ENCODE measurements at regions of chr2 and their contacts with region 1.

Region 1: DNA sequence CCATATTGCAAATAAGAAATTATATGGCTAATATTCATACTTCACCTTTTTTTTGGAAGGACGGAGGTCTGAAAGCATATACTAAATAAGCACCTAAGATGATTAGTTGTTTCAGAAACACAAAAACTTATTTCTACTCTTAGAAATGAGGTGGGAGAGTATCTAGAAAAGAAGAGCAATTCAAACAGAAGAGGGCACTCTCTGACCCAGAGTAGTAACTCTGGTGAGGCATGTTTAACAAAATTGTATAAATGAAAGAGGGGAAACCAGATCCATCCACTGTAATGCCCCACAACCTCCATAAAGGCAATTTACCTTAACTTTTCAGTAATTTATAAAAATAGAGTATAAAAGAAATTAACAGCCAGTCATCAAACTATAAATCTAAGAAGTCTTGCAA is 669.6 kb upstream of the VRK2 start:
- DNase-seq: peak; percentile 28
- H3K4me3 ChIP-seq: no peak overlapping the region
- H3K27ac ChIP-seq: no peak overlapping the region
- H3K4me1 ChIP-seq: no peaks in the 10 kb centered on the region
- H3K27me3 ChIP-seq: no peaks in the 10 kb centered on the region
- CTCF ChIP-seq: peak; percentile 44; the same call in 1 of the 2 replicates

Region 2: GRCh38 chr2:56654936-56655335 is 722.0 kb before region 1 on chr2:
- CTCF ChIA-PET with region 1: no interaction called
- POLR2A ChIA-PET with region 1: no interaction called
- intact Hi-C with region 1: no loop called
- DNase-seq: no peak
- H3K4me3 ChIP-seq: no peak overlapping the region
- H3K27ac ChIP-seq: no peak overlapping the region
- H3K4me1 ChIP-seq: no peaks in the 10 kb centered on the region
- H3K27me3 ChIP-seq: peaks cover 49% of the 10 kb centered on the region
- CTCF ChIP-seq: no peak

Region 3: GRCh38 chr2:57497489-57498096 is 120.6 kb after region 1 on chr2:
- CTCF ChIA-PET with region 1: no interaction called
- POLR2A ChIA-PET with region 1: no interaction called
- intact Hi-C with region 1: loop called (anchors 2 kb)
- DNase-seq: peak; percentile 68
- H3K4me3 ChIP-seq: no peak overlapping the region
- H3K27ac ChIP-seq: no peak overlapping the region
- H3K4me1 ChIP-seq: no peaks in the 10 kb centered on the region
- H3K27me3 ChIP-seq: no peaks in the 10 kb centered on the region
- CTCF ChIP-seq: peak; percentile 89

Region 4: DNA sequence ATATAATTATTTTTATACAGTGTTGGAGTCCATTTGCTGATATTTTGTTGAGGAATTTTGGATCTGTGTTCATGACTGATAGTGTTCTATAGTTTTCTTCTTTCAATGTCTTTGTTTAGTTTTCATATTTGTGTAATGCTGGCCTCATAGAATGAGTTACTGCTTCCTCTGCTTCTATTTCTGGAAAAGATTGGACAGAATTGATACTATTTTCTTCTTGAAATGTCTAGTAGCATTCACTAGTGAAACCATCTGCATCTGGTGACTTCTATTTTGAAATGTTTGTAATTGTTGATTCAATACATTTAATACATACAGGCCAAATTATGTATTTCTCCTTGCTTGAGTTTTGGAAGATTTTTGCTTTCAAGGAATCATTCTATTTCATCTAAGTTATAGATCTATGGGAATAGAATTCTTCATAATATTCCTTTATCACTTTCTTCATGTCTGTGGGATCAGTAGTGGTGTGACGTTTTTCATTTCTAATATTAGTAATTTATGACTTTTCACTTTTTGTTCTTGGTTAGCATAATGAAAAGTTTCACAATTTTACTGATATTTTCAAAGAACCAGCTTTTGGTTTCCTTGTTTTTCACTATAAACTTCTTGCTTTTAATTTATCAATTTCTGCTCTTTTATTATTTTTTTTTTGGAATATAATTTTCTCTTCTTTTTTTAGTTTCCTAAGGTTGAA is 159.7 kb after region 1 on chr2:
- CTCF ChIA-PET with region 1: no interaction called
- POLR2A ChIA-PET with region 1: no interaction called
- intact Hi-C with region 1: no loop called
- DNase-seq: no peak
- H3K4me3 ChIP-seq: no peak overlapping the region
- H3K27ac ChIP-seq: no peak overlapping the region
- H3K4me1 ChIP-seq: no peaks in the 10 kb centered on the region
- H3K27me3 ChIP-seq: no peaks in the 10 kb centered on the region
- CTCF ChIP-seq: no peak

Region 5: DNA sequence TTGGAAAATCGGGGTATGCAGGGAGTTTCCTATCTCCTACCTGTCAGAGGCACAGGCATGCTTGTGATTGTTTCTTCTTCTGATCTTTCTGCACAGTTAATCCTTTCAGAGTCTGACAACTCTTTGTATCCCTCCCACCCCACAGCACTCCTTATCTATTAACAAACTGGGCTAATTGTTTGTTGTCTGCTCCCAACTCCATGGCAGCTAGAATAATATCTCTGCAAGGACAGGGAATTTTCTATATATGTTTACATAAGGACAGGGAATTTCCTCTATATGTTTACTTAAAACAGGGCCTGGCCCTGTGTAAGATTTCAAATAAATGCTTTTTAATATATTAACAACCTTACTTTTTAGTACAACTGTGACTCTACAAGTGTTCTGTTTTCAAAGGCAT is 633.6 kb after region 1 on chr2:
- CTCF ChIA-PET with region 1: no interaction called
- POLR2A ChIA-PET with region 1: no interaction called
- intact Hi-C with region 1: no loop called
- DNase-seq: no peak
- H3K4me3 ChIP-seq: no peak overlapping the region
- H3K27ac ChIP-seq: no peak overlapping the region
- H3K4me1 ChIP-seq: no peaks in the 10 kb centered on the region
- H3K27me3 ChIP-seq: no peaks in the 10 kb centered on the region
- CTCF ChIP-seq: no peak

Measured in A673 (cell line).